Activated CD4-positive, alpha-beta memory T cell treated with anti-CD3 and anti-CD28 coated beads for 36 hours (primary cell): ENCODE measurements at regions of chr2 and their contacts with region 1.

Region 1: GRCh38 chr2:30266051-30266621 is 34.8 kb downstream of the LBH start:
- DNase-seq: peak; percentile 75
- H3K4me3 Mint-ChIP-seq: peak overlapping the region; percentile 76
- H3K27ac Mint-ChIP-seq: peak overlapping the region; percentile 94
- H3K4me1 Mint-ChIP-seq: peaks cover 72% of the 10 kb centered on the region
- H3K27me3 Mint-ChIP-seq: no peaks in the 10 kb centered on the region

Region 2: GRCh38 chr2:30048636-30049180 is 217.4 kb before region 1 on chr2:
- CTCF ChIA-PET with region 1: no interaction called
- POLR2A ChIA-PET with region 1: no interaction called
- intact Hi-C with region 1: no loop called
- DNase-seq: no peak
- H3K4me3 Mint-ChIP-seq: no peak overlapping the region
- H3K27ac Mint-ChIP-seq: no peak overlapping the region
- H3K4me1 Mint-ChIP-seq: no peaks in the 10 kb centered on the region
- H3K27me3 Mint-ChIP-seq: peaks cover 25% of the 10 kb centered on the region

Region 3: GRCh38 chr2:30225131-30225762 is 40.9 kb before region 1 on chr2:
- CTCF ChIA-PET with region 1: interaction called, 9 read pairs
- POLR2A ChIA-PET with region 1: interaction called, 114 read pairs
- intact Hi-C with region 1: no loop called
- DNase-seq: peak; percentile 62
- H3K4me3 Mint-ChIP-seq: peak overlapping the region; percentile 83
- H3K27ac Mint-ChIP-seq: peak overlapping the region; percentile 97
- H3K4me1 Mint-ChIP-seq: peaks cover 70% of the 10 kb centered on the region
- H3K27me3 Mint-ChIP-seq: no peaks in the 10 kb centered on the region

Region 4: GRCh38 chr2:30239308-30239985 is 26.7 kb before region 1 on chr2:
- CTCF ChIA-PET with region 1: interaction called, 17 read pairs
- POLR2A ChIA-PET with region 1: interaction called, 114 read pairs
- intact Hi-C with region 1: loop called (anchors 1 kb)
- DNase-seq: peak; percentile 87
- H3K4me3 Mint-ChIP-seq: peak overlapping the region; percentile 54
- H3K27ac Mint-ChIP-seq: peak overlapping the region; percentile 86
- H3K4me1 Mint-ChIP-seq: peaks cover 93% of the 10 kb centered on the region
- H3K27me3 Mint-ChIP-seq: no peaks in the 10 kb centered on the region

Region 5: DNA sequence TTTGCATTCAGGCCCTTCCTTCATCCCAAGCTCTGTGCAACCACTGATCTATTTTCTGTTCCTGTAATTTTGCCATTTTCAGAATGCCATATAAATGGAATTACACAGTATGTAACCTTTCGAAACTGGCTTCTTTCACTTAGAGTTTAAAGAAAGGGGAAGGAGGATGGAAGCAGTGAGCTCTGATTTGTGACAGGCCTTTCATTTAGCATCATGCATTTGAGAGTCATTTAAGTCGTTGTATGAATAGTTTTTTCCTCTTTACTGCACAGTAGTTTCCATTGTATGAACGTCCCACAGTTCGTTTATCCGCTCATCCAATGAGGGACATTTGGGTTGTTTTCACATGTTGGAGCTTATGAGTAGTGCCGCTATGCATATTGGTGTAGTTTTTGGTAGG is 32.2 kb after region 1 on chr2:
- CTCF ChIA-PET with region 1: interaction called, 4 read pairs
- POLR2A ChIA-PET with region 1: interaction called, 7 read pairs
- intact Hi-C with region 1: loop called (anchors 1 kb)
- DNase-seq: no peak
- H3K4me3 Mint-ChIP-seq: no peak overlapping the region
- H3K27ac Mint-ChIP-seq: peak overlapping the region; percentile 3
- H3K4me1 Mint-ChIP-seq: peaks cover 22% of the 10 kb centered on the region
- H3K27me3 Mint-ChIP-seq: no peaks in the 10 kb centered on the region

Region 6: GRCh38 chr2:30336978-30337841 is 71.1 kb after region 1 on chr2:
- CTCF ChIA-PET with region 1: interaction called, 3 read pairs
- POLR2A ChIA-PET with region 1: interaction called, 5 read pairs
- intact Hi-C with region 1: loop called (anchors 1 kb)
- DNase-seq: peak; percentile 83
- H3K4me3 Mint-ChIP-seq: peak overlapping the region; percentile 68
- H3K27ac Mint-ChIP-seq: peak overlapping the region; percentile 96
- H3K4me1 Mint-ChIP-seq: peaks cover 75% of the 10 kb centered on the region
- H3K27me3 Mint-ChIP-seq: no peaks in the 10 kb centered on the region

Region 7: DNA sequence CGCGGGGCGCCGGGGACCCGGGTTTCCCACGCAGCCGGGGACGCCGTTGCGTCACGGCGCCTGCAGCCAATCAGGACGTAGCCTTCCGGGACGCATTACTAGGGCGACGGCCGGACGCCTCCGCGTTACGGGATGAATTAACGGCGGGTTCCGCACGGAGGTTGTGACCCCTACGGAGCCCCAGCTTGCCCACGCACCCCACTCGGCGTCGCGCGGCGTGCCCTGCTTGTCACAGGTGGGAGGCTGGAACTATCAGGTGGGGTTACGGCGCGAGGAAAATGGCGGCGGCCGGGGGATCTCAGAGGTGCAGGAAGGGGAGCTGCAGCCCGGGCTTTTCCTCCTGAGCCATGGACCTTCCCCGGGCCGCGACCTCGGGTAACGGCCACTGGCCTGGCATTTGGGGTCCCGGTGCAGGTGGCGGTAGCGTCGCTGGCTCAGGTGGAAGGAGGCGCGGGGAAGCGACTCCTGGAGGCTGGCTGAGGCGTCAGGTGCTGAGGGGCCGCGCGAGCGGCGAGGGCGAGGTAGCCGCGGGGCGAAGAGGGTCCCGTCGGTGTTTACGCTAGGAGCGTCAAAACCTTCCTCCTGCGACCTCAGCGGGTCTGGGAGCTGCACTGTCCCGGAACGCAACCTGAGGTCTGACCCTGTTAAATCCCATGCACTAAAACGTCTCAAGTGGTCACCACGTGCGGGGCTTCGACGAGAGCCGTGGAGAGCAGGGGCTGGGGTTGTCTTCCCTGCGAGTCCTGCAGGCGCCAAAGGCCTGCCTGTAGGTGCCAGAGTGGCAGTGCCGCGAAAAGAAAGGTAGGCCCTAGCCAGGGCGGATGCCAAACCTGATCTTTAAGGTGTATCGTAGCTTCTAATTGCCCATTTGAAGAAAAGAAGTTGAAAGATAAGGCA is 181.3 kb after region 1 on chr2 and contains the start of gene LCLAT1:
- CTCF ChIA-PET with region 1: interaction called, 4 read pairs
- POLR2A ChIA-PET with region 1: interaction called, 3 read pairs
- intact Hi-C with region 1: loop called (anchors 2 kb)
- DNase-seq: peak; percentile 90
- H3K4me3 Mint-ChIP-seq: peak within 1 kb of the TSS; percentile 88
- H3K27ac Mint-ChIP-seq: peak within 1 kb of the TSS; percentile 95
- H3K4me1 Mint-ChIP-seq: peaks cover 24% of the 10 kb centered on the region
- H3K27me3 Mint-ChIP-seq: no peaks in the 10 kb centered on the region
- total RNA-seq, gene LCLAT1: 21.5 to 24.3 TPM